Left colon (tissue), 2 donors: ENCODE measurements at regions of chr6 and their contacts with region 1.

Region 1: DNA sequence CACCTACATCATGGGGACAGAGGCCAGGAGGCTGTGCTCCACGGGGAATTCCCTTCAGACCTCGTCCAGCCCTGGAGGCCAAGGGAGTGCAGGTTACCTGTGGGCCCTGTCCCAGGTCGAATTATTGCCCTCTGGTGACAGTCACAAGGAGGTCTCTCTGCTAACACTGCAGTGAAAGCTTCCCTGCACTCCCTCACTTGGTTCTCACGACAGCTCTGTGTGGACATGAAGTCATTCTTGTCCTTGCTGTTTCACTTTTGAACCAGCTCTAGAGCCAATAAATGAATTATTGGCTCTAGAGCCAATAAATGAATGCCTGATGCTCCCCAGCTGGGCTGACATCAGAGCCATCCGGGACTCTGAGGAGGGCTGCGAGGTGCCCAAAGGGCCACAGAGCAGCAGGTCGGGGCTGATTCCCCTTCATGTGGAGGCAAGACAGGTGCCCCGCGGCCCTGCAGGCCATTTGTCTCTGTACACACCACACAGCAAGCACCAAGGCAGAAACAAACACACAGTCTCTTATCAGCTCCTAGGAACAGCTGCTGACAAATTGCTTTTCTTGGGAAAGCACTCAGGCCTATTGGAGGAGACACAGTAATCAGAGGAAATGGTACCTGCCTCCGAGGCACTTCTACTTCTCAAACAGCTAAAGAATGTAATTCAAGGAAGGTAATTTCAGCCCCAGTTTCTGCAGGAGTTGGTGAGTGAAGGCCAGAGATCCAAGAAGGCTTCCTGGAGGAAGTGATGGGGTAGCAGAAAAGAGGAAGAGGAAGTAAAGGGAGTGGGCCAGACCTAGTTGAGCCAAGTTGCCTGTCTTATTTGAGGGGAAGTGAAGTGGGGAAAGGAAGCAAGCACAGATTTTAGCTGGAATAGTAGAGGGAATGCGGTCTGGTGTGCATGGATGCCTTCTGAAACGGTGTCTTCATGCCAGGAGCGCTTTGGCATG is 27.5 kb upstream of the TBXT start:
- DNase-seq: no peak
- ATAC-seq: peak; percentile 59

Region 2: DNA sequence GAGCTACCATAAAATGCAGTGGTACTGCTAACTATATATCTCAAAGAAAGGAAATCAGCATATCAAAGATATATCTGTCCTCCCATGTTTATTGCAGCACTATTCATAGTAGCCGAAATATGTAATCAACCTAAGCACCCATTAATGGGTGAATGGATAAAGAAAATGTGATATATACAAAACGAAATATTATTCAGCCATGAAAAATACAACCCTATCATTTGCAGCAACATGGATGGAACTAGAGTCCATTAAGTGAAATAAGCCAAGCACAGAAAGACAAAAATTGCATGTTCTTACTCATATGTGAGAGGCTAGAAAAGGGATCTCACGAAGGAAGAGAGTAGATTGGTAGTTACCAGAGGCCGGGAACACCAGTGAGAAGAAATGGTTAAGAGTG is 658.3 kb before region 1 on chr6:
- intact Hi-C with region 1: loop called in 1 of 2 experiments (anchors 5 kb)
- DNase-seq: no peak
- ATAC-seq: no peak

Region 3: GRCh38 chr6:166143011-166143410 is 52.2 kb before region 1 on chr6:
- intact Hi-C with region 1: no loop called
- DNase-seq: no peak
- ATAC-seq: no peak

Region 4: GRCh38 chr6:166253281-166253681 is 58.1 kb after region 1 on chr6:
- intact Hi-C with region 1: no loop called
- DNase-seq: peak in 1 of 2 donors; percentile 41
- ATAC-seq: no peak